Common myeloid progenitor, CD34-positive (primary cell): ENCODE measurements at regions of chr16 and their contacts with region 1.

Region 1: DNA sequence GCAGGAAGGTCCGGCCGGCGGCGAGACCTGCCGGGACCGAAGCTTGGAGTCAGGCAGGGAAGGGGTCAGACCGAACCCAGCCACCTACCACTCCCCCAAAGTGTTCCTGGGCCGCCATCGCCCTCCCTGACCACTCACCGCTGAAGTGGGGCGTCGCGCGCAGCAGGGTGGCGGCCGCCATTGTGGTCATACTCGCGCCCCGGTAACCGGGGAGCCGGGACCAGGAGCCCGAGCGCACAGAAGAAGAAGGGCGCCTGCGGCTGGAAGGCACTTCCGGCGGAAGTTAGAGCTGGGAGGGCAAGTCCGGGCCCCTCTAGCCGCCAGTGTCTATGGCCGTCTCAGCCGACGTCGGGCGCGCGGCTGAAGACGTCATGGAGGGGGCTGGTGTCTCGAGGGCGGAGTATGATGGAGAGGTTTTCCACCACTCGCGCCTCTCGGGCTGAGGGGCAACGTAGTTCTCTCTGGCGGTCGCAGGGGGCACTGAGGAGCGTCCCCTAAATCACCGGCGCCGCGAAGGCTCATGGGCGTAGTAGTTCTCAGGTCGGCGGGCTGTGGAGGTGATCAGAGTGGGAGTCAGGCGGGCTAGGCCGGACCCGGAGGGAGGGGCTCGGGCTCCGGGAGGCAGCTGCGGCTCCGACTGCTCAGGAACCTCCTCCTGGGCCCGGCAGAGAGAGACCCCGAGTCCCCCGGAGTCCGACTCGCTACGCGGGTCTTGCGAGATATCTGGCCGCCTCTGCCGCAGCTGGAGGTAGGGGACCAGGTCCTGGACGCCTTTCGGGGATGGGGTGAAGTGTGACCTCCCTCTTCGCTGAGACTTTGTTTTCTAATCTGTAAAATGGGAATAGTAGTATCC is at the start of gene TUFM:
- DNase-seq: peak; percentile 99
- H3K4me3 ChIP-seq: peak within 1 kb of the TSS; percentile 85 to 97 (median 93)
- H3K27ac ChIP-seq: peak within 1 kb of the TSS; percentile 79 to 90
- H3K4me1 ChIP-seq: peaks cover 4 to 25% (median 22%) of the 10 kb centered on the region in 4 experiments
- H3K27me3 ChIP-seq: no peaks in the 10 kb centered on the region

Region 2: DNA sequence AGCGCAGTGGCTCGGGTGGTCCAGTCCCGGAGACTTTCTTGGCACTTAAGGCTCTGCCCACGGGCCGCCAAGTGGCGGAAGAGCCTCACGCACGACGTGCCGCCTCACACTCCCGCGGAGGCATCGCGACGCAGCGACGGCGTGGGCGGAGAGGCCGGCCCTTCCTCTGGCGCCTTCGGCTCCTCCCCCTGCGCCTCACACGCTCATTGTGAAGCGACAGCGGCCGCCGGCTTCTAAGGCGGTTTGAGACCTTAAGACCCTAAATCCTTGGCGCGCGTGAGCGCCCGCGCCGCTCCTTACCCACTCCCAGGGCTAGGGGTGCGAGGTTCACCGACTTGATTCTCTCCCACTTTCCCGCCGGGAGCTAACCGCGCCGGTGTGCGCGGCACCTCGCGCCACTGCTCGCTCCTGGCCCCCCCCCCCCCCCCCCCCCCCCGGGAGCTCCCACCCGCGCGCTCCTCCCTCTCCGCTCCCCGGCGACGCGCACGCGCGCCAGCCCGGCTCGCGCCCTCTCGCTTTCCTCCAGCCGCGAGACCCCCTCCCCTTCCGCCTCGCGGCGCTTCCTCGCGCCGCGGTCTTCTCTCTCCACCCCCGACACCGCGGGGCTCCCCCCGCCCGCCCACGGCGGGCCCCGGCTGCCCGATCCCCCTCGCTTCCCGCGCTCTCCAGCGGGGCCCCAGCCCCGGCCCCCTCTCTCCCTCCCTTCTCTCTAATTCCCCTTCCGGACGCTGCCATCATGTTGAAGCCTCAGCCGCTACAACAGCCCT is 23.6 kb before region 1 on chr16 and contains the start of gene ATXN2L:
- CTCF ChIA-PET with region 1: interaction called, 11 read pairs
- POLR2A ChIA-PET with region 1: interaction called, 5 read pairs
- DNase-seq: peak; percentile 97 to 98 (median 98)
- H3K4me3 ChIP-seq: peak within 1 kb of the TSS; percentile 88 to 96 (median 94)
- H3K27ac ChIP-seq: peak within 1 kb of the TSS; percentile 96 to 99
- H3K4me1 ChIP-seq: peaks cover 14 to 23% (median 21%) of the 10 kb centered on the region in 4 experiments
- H3K27me3 ChIP-seq: no peaks in the 10 kb centered on the region

Region 3: GRCh38 chr16:28830531-28830930 is 15.8 kb before region 1 on chr16:
- CTCF ChIA-PET with region 1: interaction called, 10 read pairs
- POLR2A ChIA-PET with region 1: interaction called, 4 read pairs
- DNase-seq: no peak
- H3K4me3 ChIP-seq: no peak overlapping the region
- H3K27ac ChIP-seq: no peak overlapping the region
- H3K4me1 ChIP-seq: peaks cover 0 to 4% (median 3%) of the 10 kb centered on the region in 4 experiments
- H3K27me3 ChIP-seq: no peaks in the 10 kb centered on the region

Region 4: DNA sequence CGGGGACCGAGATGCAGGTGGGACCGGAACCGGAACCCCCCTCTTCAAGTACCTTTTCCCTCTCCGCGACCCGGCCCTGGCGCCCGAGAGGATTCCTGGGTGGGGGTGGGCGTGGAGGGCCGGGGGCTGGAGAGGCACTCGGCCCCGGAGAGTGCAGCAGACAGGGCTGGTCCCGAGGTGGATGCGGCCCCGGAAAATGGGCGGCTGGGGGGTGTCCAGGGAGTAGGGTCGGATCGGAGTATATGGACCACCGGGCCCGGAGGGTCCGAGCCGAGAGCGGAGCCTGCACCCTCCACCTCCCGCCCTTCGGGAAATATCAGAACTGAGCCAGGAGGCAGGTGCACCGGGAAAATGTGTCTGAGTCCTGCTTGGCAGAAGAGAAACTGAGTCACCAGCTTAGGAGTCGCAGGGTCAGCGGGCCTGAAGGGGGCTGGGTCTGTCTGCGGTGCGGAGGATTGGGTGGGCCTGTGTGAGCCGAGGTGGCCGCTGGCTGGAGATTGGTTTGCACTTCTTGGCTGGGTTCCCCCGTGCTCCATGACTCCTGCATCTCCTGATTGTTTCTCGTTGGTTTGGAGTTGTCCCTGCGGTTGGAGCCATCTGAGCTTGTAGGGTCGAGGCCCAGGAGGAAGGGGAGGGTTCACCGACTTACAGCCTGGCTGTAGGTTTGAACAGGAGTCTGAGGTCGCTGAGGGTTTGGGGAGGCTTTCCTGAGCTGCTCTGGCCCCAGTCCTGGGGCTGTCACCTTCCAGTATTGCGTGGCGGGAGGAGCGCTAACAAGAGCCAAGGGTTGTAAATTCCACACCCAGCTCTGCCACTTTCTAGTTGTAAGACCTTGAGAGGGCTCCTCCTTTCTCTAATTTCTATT is 17.9 kb after region 1 on chr16:
- CTCF ChIA-PET with region 1: interaction called, 15 read pairs
- POLR2A ChIA-PET with region 1: interaction called, 20 read pairs
- DNase-seq: peak in 2 of 3 donors; percentile 32 to 47
- H3K4me3 ChIP-seq: peak overlapping the region; percentile 87 to 100 (median 93)
- H3K27ac ChIP-seq: peak overlapping the region; percentile 61 to 96
- H3K4me1 ChIP-seq: peaks cover 0 to 22% (median 19%) of the 10 kb centered on the region in 4 experiments
- H3K27me3 ChIP-seq: no peaks in the 10 kb centered on the region

Region 5: GRCh38 chr16:28951410-28951943 is 105.2 kb after region 1 on chr16:
- CTCF ChIA-PET with region 1: no interaction called
- POLR2A ChIA-PET with region 1: no interaction called
- DNase-seq: peak in 1 of 3 donors; percentile 19
- H3K4me3 ChIP-seq: peak overlapping the region; percentile 70 to 92 (median 82)
- H3K27ac ChIP-seq: peak overlapping the region; percentile 7 to 82
- H3K4me1 ChIP-seq: peaks cover 0 to 16% (median 13%) of the 10 kb centered on the region in 4 experiments
- H3K27me3 ChIP-seq: no peaks in the 10 kb centered on the region